ENCODE measurements at regions of chr13 and their contacts with region 1.

Region 1: DNA sequence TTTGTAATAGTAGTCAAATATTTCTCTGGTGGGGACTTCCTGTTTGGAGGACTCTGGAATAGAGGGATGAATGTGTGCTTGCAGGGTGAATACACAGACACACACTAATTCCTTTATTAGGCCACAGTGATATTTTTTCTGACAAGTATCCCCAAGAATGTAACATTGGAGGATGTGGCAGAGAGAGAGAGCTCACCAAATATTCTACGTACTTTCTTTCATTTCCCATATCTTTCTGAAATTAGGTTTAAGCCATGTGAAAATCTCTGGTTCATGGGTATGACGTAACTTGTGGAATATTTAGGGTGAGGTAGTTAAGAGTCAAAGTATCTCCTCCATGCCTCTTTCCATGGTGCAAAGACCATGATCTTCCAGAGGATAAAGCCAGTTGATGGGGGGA is 463.4 kb downstream of the DIAPH3 start:
- DNase-seq: no peak
- CTCF ChIP-seq: no peak

Region 2: DNA sequence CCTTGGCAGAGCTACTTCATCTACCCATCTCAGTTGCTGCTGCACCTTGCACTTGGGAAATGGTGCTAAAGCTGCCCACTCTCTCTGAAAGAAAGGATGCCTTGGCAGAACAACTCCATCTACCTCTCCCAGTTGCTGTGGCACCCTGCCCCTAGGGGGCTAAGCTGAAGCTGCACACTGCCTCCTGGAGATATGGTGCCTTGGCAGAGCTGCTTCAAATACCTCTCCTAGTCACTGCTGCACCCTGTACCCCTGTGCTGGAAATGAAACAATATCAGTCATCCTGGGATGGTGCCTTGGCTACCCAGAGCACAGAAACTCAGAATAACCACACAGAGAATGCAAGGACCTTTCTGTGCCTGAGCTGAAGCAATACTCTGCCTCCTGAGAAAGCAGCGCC is 152.3 kb before region 1 on chr13:
- CTCF ChIA-PET with region 1: no interaction called
- POLR2A ChIA-PET with region 1: no interaction called
- DNase-seq: no peak
- CTCF ChIP-seq: no peak

Region 3: GRCh38 chr13:59721926-59722910 is 21.9 kb after region 1 on chr13:
- CTCF ChIA-PET with region 1: interaction called, 10 read pairs
- POLR2A ChIA-PET with region 1: no interaction called
- DNase-seq: no peak
- CTCF ChIP-seq: no peak